ENCODE measurements at regions of chr9 and their contacts with region 1.

Region 1: GRCh38 chr9:76704593-76705204 is 59.5 kb upstream of the PCA3 start:
- DNase-seq: no peak
- ATAC-seq: peak; percentile 50 to 72
- H3K4me3 ChIP-seq: no peak overlapping the region
- H3K27ac ChIP-seq: no peak overlapping the region
- H3K4me1 ChIP-seq: peaks cover 4% of the 10 kb centered on the region
- H3K27me3 ChIP-seq: no peaks in the 10 kb centered on the region
- CTCF ChIP-seq: peak; percentile 70

Region 2: DNA sequence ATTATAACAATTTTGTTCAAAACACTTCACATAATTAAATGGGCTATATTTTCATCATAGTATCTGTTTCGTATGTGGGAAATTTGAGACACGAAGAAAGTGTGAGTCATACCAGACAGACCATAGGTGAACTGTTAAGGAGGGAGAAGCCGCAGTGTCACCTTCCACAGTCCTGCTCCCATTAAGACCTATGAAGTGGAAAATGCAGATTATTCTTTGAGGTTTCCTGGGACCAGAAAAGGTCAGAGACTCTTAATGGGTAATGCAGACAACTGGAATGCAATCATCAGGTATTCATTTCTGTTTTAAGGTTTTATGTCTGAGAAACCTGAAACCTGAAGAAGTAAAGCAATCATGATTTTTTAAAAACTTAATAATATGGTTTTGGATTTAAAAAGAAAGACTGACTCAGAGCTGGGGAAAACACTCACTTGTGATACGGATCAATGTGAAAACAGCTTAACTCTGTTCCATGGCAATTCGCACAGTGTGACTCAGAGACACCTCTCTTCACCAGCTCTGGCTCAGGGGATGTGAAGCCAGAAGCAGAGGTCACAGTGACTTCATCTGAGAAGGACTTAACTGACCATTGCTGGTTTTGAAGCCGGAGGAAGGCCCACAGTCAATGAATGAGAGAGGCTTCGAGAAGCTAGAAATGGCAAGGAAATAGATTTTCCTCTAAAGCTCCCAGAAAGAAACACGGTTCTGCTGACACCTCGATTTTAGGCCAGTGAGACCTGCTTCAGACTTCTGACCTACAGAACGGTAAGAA is 263.0 kb before region 1 on chr9:
- intact Hi-C with region 1: loop called (anchors 10 kb)
- DNase-seq: no peak
- ATAC-seq: no peak
- H3K4me3 ChIP-seq: no peak overlapping the region
- H3K27ac ChIP-seq: no peak overlapping the region
- H3K4me1 ChIP-seq: no peaks in the 10 kb centered on the region
- H3K27me3 ChIP-seq: no peaks in the 10 kb centered on the region
- CTCF ChIP-seq: no peak

Region 3: GRCh38 chr9:76576344-76576743 is 128.4 kb before region 1 on chr9:
- intact Hi-C with region 1: no loop called
- DNase-seq: peak; percentile 57
- ATAC-seq: peak; percentile 75 to 81
- H3K4me3 ChIP-seq: no peak overlapping the region
- H3K27ac ChIP-seq: peak overlapping the region; percentile 33
- H3K4me1 ChIP-seq: peaks cover 14% of the 10 kb centered on the region
- H3K27me3 ChIP-seq: no peaks in the 10 kb centered on the region
- CTCF ChIP-seq: no peak

Region 4: GRCh38 chr9:76798527-76798926 is 93.8 kb after region 1 on chr9:
- intact Hi-C with region 1: no loop called
- DNase-seq: no peak
- ATAC-seq: no peak
- H3K4me3 ChIP-seq: no peak overlapping the region
- H3K27ac ChIP-seq: no peak overlapping the region
- H3K4me1 ChIP-seq: no peaks in the 10 kb centered on the region
- H3K27me3 ChIP-seq: no peaks in the 10 kb centered on the region
- CTCF ChIP-seq: no peak